CD8-positive, alpha-beta T cell (primary cell): ENCODE measurements at regions of chr2 and their contacts with region 1.

Region 1: DNA sequence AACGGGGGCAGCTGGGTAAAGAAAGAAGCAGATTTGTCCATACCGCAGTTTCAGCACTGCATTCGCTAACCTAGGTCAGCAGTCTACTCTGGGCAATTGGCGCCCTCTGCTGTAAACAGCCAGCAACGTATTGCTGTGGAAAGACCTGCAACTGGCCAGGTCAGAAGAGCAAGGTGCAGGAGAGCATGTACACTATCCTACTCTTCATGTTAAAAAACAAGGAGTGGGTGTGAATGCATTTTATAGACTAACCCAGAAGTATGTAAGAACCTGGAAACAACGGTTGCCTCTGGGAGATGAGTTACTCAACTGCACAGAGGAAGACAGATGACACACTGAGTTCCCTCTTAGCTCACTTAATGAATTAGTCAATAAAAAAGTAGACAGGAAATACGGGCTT is 6.2 kb downstream of the MRPS5 start:
- DNase-seq: peak; percentile 46 to 82 (median 76)
- ATAC-seq: peak; percentile 97
- H3K4me3 ChIP-seq: no peak overlapping the region
- H3K4me3 Mint-ChIP-seq: no peak overlapping the region
- H3K27ac ChIP-seq: no peak overlapping the region
- H3K27ac Mint-ChIP-seq: peak overlapping the region; percentile 28
- H3K4me1 ChIP-seq: peaks cover 28% of the 10 kb centered on the region
- H3K4me1 Mint-ChIP-seq: peaks cover 42% of the 10 kb centered on the region
- H3K27me3 ChIP-seq: no peaks in the 10 kb centered on the region
- H3K27me3 Mint-ChIP-seq: no peaks in the 10 kb centered on the region
- CTCF ChIP-seq: peak; percentile 90

Region 2: DNA sequence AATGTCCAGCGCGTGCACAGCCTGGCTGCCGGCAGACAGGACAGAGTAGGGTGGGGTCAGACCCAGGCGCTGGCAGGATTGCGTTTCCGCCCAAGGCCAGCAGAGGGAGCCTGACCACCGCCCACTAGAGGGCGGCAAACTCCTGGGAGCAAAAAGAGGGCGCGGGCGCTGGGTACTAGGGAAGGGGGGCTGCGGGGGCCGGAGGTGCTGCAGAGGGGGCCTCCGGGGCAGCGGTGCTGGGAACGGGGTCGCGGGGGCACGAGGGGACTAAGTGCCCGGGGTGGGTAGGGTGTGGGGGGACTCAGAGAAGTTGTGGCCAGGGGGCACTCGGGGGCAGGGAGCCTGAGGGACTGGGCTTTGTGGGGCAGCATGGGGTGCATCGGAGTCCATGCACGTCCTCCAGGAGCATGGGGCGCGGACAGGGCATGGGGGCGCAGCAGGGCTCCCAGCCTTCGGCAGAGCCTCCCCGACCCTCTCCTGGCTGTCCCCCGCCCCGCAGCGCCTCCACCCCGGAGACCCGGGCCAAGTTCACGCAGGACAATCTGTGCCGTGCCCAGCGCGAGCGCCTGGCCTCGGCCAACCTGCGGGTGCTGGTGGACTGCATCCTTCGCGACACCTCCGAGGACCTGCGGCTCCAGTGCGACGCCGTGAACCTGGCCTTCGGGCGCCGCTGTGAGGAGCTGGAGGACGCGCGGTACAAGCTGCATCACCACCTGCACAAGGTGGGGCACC is 241.0 kb before region 1 on chr2:
- CTCF ChIA-PET with region 1: no interaction called
- POLR2A ChIA-PET with region 1: no interaction called
- intact Hi-C with region 1: loop called (anchors 10 kb)
- DNase-seq: peak; percentile 21 to 67 (median 48)
- ATAC-seq: peak; percentile 59
- H3K4me3 ChIP-seq: no peak overlapping the region
- H3K4me3 Mint-ChIP-seq: no peak overlapping the region
- H3K27ac ChIP-seq: no peak overlapping the region
- H3K27ac Mint-ChIP-seq: no peak overlapping the region
- H3K4me1 ChIP-seq: no peaks in the 10 kb centered on the region
- H3K4me1 Mint-ChIP-seq: no peaks in the 10 kb centered on the region
- H3K27me3 ChIP-seq: no peaks in the 10 kb centered on the region
- H3K27me3 Mint-ChIP-seq: peaks cover 9% of the 10 kb centered on the region
- CTCF ChIP-seq: peak; percentile 67

Region 3: GRCh38 chr2:94986392-94986963 is 128.9 kb before region 1 on chr2:
- CTCF ChIA-PET with region 1: interaction called, 4 read pairs
- POLR2A ChIA-PET with region 1: no interaction called
- intact Hi-C with region 1: loop called in 1 of 2 experiments (anchors 1 kb)
- DNase-seq: peak in 5 of 9 experiments; percentile 15 to 45 (median 33)
- ATAC-seq: no peak
- H3K4me3 ChIP-seq: no peak overlapping the region
- H3K4me3 Mint-ChIP-seq: no peak overlapping the region
- H3K27ac ChIP-seq: no peak overlapping the region
- H3K27ac Mint-ChIP-seq: no peak overlapping the region
- H3K4me1 ChIP-seq: no peaks in the 10 kb centered on the region
- H3K4me1 Mint-ChIP-seq: no peaks in the 10 kb centered on the region
- H3K27me3 ChIP-seq: no peaks in the 10 kb centered on the region
- H3K27me3 Mint-ChIP-seq: peaks cover 9% of the 10 kb centered on the region
- CTCF ChIP-seq: peak; percentile 72

Region 4: DNA sequence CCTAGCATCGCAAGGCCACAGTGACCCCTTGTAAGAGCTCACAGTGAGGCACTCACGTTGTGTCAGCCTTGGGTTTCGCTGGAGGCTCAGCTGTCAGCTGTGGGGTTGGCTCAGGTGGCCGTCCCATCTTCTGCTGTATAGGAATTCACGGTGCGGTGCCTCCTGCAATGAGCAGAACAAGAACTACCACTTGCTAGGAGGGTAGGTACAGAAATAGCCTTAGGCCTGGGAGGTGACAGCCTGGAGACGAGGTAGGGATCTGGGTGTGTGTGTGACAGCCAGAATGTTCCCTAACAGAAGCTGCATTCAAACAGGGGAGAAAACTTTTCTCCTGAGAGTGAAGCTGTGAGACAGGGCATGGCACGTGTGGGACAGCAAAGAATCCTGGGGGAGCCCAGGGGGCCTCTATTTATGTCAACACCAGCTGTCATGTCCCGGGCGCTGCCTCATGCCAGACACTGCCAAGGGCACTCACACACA is 98.4 kb before region 1 on chr2:
- CTCF ChIA-PET with region 1: interaction called, 142 read pairs
- POLR2A ChIA-PET with region 1: interaction called, 11 read pairs
- intact Hi-C with region 1: loop called (anchors 1 kb)
- DNase-seq: no peak
- ATAC-seq: no peak
- H3K4me3 ChIP-seq: no peak overlapping the region
- H3K4me3 Mint-ChIP-seq: no peak overlapping the region
- H3K27ac ChIP-seq: no peak overlapping the region
- H3K27ac Mint-ChIP-seq: no peak overlapping the region
- H3K4me1 ChIP-seq: peaks cover 4% of the 10 kb centered on the region
- H3K4me1 Mint-ChIP-seq: peaks cover 4% of the 10 kb centered on the region
- H3K27me3 ChIP-seq: no peaks in the 10 kb centered on the region
- H3K27me3 Mint-ChIP-seq: no peaks in the 10 kb centered on the region
- CTCF ChIP-seq: no peak

Region 5: DNA sequence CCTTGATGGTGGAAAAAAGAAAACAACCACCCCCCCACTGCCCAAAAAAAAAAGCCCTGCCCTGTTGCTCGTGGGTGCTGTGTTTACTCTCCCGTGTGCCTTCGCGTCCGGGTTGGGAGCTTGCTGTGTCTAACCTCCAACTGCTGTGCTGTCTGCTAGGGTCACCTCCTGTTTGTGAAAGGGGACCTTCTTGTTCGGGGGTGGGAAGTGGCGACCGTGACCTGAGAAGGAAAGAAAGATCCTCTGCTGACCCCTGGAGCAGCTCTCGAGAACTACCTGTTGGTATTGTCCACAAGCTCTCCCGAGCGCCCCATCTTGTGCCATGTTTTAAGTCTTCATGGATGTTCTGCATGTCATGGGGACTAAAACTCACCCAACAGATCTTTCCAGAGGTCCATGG is 61.9 kb before region 1 on chr2:
- CTCF ChIA-PET with region 1: interaction called, 18 read pairs
- POLR2A ChIA-PET with region 1: no interaction called
- intact Hi-C with region 1: no loop called
- DNase-seq: peak in 5 of 9 experiments; percentile 25 to 56 (median 30)
- ATAC-seq: peak; percentile 28
- H3K4me3 ChIP-seq: no peak overlapping the region
- H3K4me3 Mint-ChIP-seq: peak overlapping the region; percentile 60
- H3K27ac ChIP-seq: no peak overlapping the region
- H3K27ac Mint-ChIP-seq: peak overlapping the region; percentile 92
- H3K4me1 ChIP-seq: peaks cover 69% of the 10 kb centered on the region
- H3K4me1 Mint-ChIP-seq: peaks cover 66% of the 10 kb centered on the region
- H3K27me3 ChIP-seq: no peaks in the 10 kb centered on the region
- H3K27me3 Mint-ChIP-seq: no peaks in the 10 kb centered on the region
- CTCF ChIP-seq: no peak

Region 6: GRCh38 chr2:95207111-95207961 is 91.9 kb after region 1 on chr2 and contains the start of gene ZNF892:
- CTCF ChIA-PET with region 1: no interaction called
- POLR2A ChIA-PET with region 1: no interaction called
- intact Hi-C with region 1: no loop called
- DNase-seq: peak; percentile 53 to 89 (median 79)
- ATAC-seq: peak; percentile 90
- H3K4me3 ChIP-seq: peak within 1 kb of the TSS; percentile 74 to 97
- H3K4me3 Mint-ChIP-seq: peak within 1 kb of the TSS; percentile 94
- H3K27ac ChIP-seq: peak within 1 kb of the TSS; percentile 68 to 79
- H3K27ac Mint-ChIP-seq: peak within 1 kb of the TSS; percentile 91
- H3K4me1 ChIP-seq: peaks cover 7% of the 10 kb centered on the region
- H3K4me1 Mint-ChIP-seq: peaks cover 32% of the 10 kb centered on the region
- H3K27me3 ChIP-seq: no peaks in the 10 kb centered on the region
- H3K27me3 Mint-ChIP-seq: no peaks in the 10 kb centered on the region
- CTCF ChIP-seq: no peak
- total RNA-seq, gene ZNF892: 0.71 to 0.78 TPM

Region 7: DNA sequence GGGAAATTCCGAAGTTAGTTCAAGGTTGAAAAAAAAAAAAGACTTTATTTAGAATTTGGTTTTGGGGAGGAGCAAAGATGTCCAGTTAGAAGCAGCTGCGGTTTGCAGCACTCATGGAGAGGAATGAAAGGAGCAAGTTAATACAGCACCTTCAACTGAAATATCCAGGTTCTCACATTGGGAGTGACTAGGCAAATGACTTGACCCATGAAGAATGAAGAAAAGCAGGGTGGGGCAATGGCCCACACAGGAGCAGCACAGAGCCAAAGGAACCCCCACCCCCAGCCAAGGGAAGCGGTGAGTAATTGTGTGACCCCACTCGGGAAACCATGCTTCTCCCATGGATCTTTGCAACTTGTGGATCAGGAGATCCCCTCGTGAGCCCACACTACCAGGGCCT is 124.7 kb after region 1 on chr2:
- CTCF ChIA-PET with region 1: no interaction called
- POLR2A ChIA-PET with region 1: no interaction called
- intact Hi-C with region 1: no loop called
- DNase-seq: no peak
- ATAC-seq: no peak
- H3K4me3 ChIP-seq: no peak overlapping the region
- H3K4me3 Mint-ChIP-seq: no peak overlapping the region
- H3K27ac ChIP-seq: no peak overlapping the region
- H3K27ac Mint-ChIP-seq: no peak overlapping the region
- H3K4me1 ChIP-seq: no peaks in the 10 kb centered on the region
- H3K4me1 Mint-ChIP-seq: no peaks in the 10 kb centered on the region
- H3K27me3 ChIP-seq: no peaks in the 10 kb centered on the region
- H3K27me3 Mint-ChIP-seq: no peaks in the 10 kb centered on the region
- CTCF ChIP-seq: no peak